Astrocyte of the cerebellum (primary cell): ENCODE measurements at regions of chr9 and their contacts with region 1.

Region 1: GRCh38 chr9:98998441-98999151 is 54.9 kb downstream of the COL15A1 start:
- DNase-seq: no peak
- H3K4me3 ChIP-seq: no peak overlapping the region
- CTCF ChIP-seq: peak; percentile 85

Region 2: GRCh38 chr9:98958271-98958984 is 40.2 kb before region 1 on chr9:
- in situ Hi-C with region 1: no loop called
- DNase-seq: no peak
- H3K4me3 ChIP-seq: no peak overlapping the region
- CTCF ChIP-seq: no peak

Region 3: GRCh38 chr9:99118782-99119466 is 120.3 kb after region 1 on chr9:
- in situ Hi-C with region 1: loop called (anchors 10 kb)
- DNase-seq: no peak
- H3K4me3 ChIP-seq: no peak overlapping the region
- CTCF ChIP-seq: no peak